Thyroid gland (tissue), 4 donors: ENCODE measurements at regions of chr21 and their contacts with region 1.

Region 1: DNA sequence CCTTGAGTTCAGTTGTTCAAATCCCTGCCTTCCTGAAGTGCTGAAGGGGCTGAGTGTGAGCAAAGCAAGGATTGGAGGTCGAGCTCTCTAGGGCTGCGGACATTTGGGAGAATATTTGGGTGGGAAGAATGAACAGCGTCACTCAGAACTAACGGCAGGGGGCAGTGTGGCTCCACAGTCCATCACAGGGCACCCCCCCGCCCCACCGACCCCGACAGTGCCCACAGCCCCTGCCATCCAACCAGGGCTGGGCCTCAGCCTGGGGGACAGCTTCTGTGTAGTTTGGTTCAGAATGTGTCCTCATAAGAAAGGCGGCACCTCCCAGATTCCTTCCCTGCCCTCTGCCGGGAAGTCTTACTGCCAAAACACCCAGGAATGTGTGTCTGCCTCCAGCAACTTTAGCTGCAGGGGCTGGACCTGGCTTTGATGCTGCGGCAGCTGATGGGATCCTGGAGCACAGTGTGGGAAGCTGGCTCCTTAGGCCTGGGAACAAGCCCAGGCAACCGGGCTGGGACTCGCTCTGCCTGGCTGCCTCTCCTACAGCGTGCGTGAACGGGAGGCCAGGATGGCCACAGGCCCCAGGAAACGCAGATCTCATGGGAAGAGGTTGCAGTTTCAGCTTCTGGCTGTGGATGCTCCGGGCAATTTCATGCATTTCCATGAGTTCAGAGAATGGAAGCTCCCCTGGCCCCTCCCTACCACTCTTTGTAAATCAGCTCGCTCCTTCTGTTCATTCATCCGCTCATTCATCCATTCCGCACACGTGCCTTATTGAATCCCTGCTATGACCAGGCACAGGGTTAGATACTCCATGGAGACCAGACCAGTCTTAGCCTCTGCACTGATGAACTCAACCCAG is 104.9 kb upstream of the TMPRSS2 start:
- DNase-seq: peak; percentile 69 to 74
- H3K4me3 ChIP-seq: no peak overlapping the region
- H3K27ac ChIP-seq: peak overlapping the region; percentile 15 to 73 (median 56)
- H3K4me1 ChIP-seq: peaks cover 14 to 27% of the 10 kb centered on the region in 2 donors
- H3K27me3 ChIP-seq: no peaks in the 10 kb centered on the region
- CTCF ChIP-seq: peak; percentile 57 to 88 (median 76)
- POLR2A ChIP-seq: no peak

Region 2: GRCh38 chr21:41328660-41329607 is 284.0 kb before region 1 on chr21:
- intact Hi-C with region 1: no loop called
- DNase-seq: no peak
- H3K4me3 ChIP-seq: no peak overlapping the region
- H3K27ac ChIP-seq: no peak overlapping the region
- H3K4me1 ChIP-seq: no peaks in the 10 kb centered on the region
- H3K27me3 ChIP-seq: no peaks in the 10 kb centered on the region
- CTCF ChIP-seq: no peak
- POLR2A ChIP-seq: no peak

Region 3: GRCh38 chr21:41779659-41780058 is 166.8 kb after region 1 on chr21:
- intact Hi-C with region 1: loop called (anchors 2 kb)
- DNase-seq: no peak
- H3K4me3 ChIP-seq: no peak overlapping the region
- H3K27ac ChIP-seq: no peak overlapping the region
- H3K4me1 ChIP-seq: peaks cover 23 to 26% of the 10 kb centered on the region in 2 donors
- H3K27me3 ChIP-seq: no peaks in the 10 kb centered on the region
- CTCF ChIP-seq: no peak
- POLR2A ChIP-seq: no peak